HEK293T (cell line): ENCODE measurements at regions of chr14 and their contacts with region 1.

Region 1: DNA sequence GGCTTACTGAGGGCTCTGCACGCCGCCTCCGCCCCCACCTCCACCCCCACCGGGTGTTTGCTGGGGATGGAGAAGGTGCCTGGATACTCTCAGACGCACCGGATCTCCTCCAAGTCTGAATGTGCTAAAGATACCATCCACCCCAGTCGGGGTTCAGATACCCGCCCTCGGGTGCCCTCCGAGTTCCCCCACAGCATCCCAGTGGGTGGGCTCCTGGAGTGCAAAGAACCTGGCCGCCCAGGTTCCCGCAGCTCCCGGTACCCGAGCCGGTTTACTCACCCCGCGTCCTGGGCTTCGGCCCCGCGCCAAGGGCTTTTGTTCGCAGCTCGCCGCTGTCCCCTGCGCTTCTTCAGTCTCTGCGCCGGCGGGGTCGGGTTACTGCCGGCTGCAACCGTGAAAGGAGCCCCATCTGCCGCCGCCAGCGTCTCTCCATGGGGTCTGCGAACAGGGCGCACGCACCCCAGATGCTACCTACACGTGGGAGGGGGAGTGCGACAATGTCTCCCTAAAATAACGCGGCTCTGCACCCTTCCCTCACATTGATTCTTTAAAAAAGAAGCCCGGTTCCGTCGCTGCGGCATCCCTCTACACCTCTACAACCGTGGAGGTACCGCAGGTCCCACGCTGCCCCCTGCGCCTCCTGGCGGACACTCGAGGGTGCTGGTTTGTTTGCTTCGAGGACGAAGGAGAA is at the start of gene CCDC177:
- DNase-seq: peak; percentile 75

Region 2: DNA sequence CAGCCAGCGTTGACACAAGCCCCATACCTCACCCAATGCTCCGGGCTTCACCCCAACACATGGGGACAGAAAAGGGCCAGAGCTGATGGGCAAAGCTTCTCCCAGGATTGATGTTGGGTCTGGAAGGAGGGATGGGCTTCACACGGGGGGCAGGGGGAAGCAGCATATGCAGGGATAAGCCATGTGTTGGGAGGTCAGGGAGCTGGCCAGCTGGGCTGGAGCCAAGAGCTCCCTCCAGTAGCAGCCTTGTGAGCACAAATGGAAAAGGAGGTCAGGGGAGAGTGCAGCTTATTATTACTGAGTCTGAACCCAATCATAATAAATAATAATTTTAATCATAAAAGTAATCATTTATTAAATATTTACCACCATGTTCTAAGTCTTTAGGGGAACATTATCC is 80.6 kb before region 1 on chr14:
- CTCF ChIA-PET with region 1: no interaction called
- POLR2A ChIA-PET with region 1: no interaction called
- DNase-seq: no peak

Region 3: DNA sequence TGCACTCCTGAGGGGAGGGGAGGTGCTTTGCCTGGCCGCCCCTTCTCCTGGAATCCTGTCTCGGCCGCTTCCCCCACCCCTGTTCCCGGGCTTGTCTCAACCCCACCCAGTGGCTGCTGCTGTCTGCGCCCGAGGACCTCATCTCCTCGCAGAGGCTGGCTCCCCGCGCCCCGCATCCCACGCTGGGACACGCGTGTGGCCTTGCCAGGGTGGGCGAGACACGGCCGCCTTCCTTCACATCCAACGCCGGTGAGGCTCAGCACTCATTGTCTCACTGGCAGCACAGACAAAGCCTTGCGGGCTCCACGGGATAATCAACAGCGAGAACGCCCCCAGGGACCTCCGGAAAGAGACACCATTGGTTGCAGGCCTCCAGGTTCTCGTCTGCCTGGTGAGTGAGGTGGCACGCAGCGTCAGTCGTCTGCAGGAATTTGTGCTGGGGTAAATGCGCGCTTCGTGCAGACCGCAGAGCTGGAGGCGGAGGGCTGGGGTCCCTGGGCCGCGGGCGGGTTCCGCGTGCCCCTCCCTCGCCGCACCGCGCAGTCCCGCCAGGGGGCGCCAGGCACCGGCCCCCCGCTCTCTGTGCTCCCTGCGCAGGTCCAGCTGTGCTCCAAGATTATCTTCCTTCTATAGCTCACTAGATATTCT is 26.6 kb before region 1 on chr14:
- CTCF ChIA-PET with region 1: interaction called, 39 read pairs
- POLR2A ChIA-PET with region 1: no interaction called
- DNase-seq: peak; percentile 44

Region 4: GRCh38 chr14:69559581-69560011 is 14.8 kb before region 1 on chr14:
- CTCF ChIA-PET with region 1: interaction called, 12 read pairs
- POLR2A ChIA-PET with region 1: no interaction called
- DNase-seq: no peak

Region 5: GRCh38 chr14:69873877-69874780 is 299.7 kb after region 1 on chr14:
- CTCF ChIA-PET with region 1: no interaction called
- POLR2A ChIA-PET with region 1: no interaction called
- DNase-seq: no peak